ENCODE measurements at regions of chr11 and their contacts with region 1.

Region 1: GRCh38 chr11:110327508-110327907 is 31.1 kb upstream of the RDX start:
- DNase-seq: no peak
- H3K4me3 Mint-ChIP-seq: peak overlapping the region; percentile 84
- H3K27ac Mint-ChIP-seq: peak overlapping the region; percentile 90
- H3K4me1 Mint-ChIP-seq: peaks cover 42% of the 10 kb centered on the region
- H3K27me3 Mint-ChIP-seq: no peaks in the 10 kb centered on the region

Region 2: GRCh38 chr11:109853156-109853776 is 474.2 kb before region 1 on chr11:
- CTCF ChIA-PET with region 1: no interaction called
- POLR2A ChIA-PET with region 1: no interaction called
- DNase-seq: no peak
- H3K4me3 Mint-ChIP-seq: no peak overlapping the region
- H3K27ac Mint-ChIP-seq: no peak overlapping the region
- H3K4me1 Mint-ChIP-seq: no peaks in the 10 kb centered on the region
- H3K27me3 Mint-ChIP-seq: no peaks in the 10 kb centered on the region

Region 3: DNA sequence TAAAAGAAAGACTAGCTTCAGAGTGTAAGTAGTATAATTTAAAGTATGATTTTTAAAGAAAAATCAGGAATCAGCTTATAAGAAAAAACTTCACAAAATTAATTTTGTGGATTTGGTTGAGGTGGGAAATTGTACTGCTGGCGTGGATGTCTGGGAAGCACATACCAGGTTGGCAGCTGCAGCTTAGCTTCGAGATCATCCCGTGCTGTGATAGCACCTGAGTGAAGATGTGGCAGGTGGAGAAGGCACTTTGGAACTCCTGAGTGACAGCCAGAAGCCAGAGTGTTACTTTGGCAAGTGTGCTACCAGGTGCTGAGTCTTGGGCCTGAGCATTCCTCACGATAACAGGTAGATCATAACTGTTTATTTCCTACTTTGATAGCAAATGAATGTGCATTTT is 216.7 kb before region 1 on chr11:
- CTCF ChIA-PET with region 1: no interaction called
- POLR2A ChIA-PET with region 1: no interaction called
- DNase-seq: no peak
- H3K4me3 Mint-ChIP-seq: no peak overlapping the region
- H3K27ac Mint-ChIP-seq: no peak overlapping the region
- H3K4me1 Mint-ChIP-seq: no peaks in the 10 kb centered on the region
- H3K27me3 Mint-ChIP-seq: peaks cover 10% of the 10 kb centered on the region

Region 4: DNA sequence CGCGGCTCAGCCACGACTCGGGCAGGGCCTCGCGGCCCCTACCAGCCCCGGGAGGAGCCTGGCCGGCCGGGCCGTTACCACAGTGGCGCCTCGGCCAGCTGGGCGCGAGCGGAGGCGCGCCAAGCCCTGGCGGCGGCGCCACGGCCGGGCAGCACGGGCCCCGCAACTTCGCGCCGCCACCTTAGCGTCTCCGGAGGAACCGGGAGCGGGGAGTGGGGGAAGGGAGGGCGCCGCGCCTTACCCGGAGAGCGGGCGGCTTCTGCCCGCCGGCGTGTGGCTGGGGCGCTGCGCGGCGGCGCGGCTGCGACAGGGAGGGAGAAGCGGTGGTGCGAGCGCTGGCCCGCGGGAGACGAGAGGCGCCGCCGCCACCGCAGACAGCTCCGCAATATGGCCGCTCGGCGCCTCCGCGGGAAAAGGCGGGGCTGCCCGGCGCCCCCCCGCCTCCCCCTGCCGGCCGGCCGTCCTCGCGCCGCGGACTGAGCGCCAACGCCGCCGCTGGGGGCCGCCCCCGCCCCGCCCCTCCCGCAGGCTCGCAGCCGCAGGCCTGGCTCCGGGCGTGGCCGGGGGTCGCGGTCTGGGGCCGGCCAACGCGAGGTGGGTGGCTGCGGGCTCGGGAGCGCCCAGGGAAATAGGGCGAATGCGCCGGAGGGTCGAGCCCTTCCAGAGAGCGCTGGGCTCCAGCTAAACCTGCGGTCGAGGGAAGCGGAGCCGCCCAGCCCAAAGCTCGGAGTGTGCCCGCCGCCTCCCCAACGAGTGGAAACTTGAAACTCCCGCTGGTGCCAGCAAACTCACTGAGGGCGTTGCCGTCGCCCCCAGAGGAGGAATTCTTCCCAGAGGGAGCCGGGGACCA is 31.1 kb before region 1 on chr11 and contains the start of gene RDX:
- CTCF ChIA-PET with region 1: no interaction called
- POLR2A ChIA-PET with region 1: interaction called, 17 read pairs
- DNase-seq: peak; percentile 66
- H3K4me3 Mint-ChIP-seq: peak within 1 kb of the TSS; percentile 91
- H3K27ac Mint-ChIP-seq: peak within 1 kb of the TSS; percentile 77
- H3K4me1 Mint-ChIP-seq: peaks cover 45% of the 10 kb centered on the region
- H3K27me3 Mint-ChIP-seq: no peaks in the 10 kb centered on the region
- total RNA-seq, gene RDX: 53.5 to 54.4 TPM

Region 5: GRCh38 chr11:110314366-110315095 is 13.0 kb before region 1 on chr11:
- CTCF ChIA-PET with region 1: no interaction called
- POLR2A ChIA-PET with region 1: no interaction called
- DNase-seq: no peak
- H3K4me3 Mint-ChIP-seq: no peak overlapping the region
- H3K27ac Mint-ChIP-seq: no peak overlapping the region
- H3K4me1 Mint-ChIP-seq: peaks cover 9% of the 10 kb centered on the region
- H3K27me3 Mint-ChIP-seq: peaks cover 4% of the 10 kb centered on the region

Region 6: GRCh38 chr11:110445437-110445836 is 117.9 kb after region 1 on chr11:
- CTCF ChIA-PET with region 1: no interaction called
- POLR2A ChIA-PET with region 1: no interaction called
- DNase-seq: no peak
- H3K4me3 Mint-ChIP-seq: no peak overlapping the region
- H3K27ac Mint-ChIP-seq: no peak overlapping the region
- H3K4me1 Mint-ChIP-seq: peaks cover 14% of the 10 kb centered on the region
- H3K27me3 Mint-ChIP-seq: no peaks in the 10 kb centered on the region

Measured in activated CD4-positive, alpha-beta memory T cell treated with anti-CD3 and anti-CD28 coated beads, Interleukin-2, amount 10 ng/mL, durations not matched to agents 7 days and 5 days (primary cell).